Activated CD4-positive, alpha-beta T cell treated with anti-CD3 and anti-CD28 coated beads, Interleukin-2, amount 10 ng/mL, durations not matched to agents 24 days and 14 days (primary cell): ENCODE measurements at regions of chr10 and their contacts with region 1.

Region 1: GRCh38 chr10:99435986-99436638 is 5.7 kb upstream of the GOT1 start:
- DNase-seq: no peak
- H3K4me3 Mint-ChIP-seq: no peak overlapping the region
- H3K27ac Mint-ChIP-seq: no peak overlapping the region
- H3K4me1 Mint-ChIP-seq: peaks cover 18% of the 10 kb centered on the region
- H3K27me3 Mint-ChIP-seq: no peaks in the 10 kb centered on the region

Region 2: DNA sequence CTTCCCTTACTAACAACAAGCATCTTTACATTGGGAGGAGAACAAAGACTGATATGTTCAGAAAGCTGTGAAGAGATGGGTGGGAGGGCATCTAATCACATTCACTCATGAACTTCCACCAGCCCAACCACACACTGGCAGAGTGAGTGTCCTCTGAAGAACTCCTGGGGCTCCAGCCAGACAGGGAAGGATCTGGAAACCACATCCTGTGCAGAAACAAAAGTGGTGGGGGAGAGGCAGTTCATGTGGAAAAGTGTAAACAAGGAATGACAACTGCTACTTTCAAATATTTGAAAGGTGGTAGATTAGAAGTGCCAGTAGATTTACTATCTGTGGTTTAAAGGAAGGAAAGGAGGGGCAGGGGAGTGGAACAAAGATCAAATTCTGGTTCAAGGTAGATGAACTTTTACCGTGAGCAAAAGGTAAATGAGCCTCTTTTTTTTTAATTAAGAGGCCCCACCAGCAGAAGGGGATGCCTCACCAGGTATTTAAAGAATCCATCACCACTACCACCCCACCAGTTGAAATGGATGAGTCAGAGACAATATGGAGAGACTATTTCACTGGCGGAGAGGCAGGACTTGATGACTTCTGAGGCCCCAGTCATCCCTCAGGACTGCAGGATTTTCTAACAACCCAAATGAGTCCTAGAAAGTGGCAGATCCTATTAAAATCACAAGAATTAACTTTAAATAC is 40.2 kb before region 1 on chr10:
- intact Hi-C with region 1: loop called (anchors 1 kb)
- DNase-seq: no peak
- H3K4me3 Mint-ChIP-seq: no peak overlapping the region
- H3K27ac Mint-ChIP-seq: peak overlapping the region; percentile 20
- H3K4me1 Mint-ChIP-seq: peaks cover 8% of the 10 kb centered on the region
- H3K27me3 Mint-ChIP-seq: peaks cover 2% of the 10 kb centered on the region

Region 3: GRCh38 chr10:99560277-99561126 is 124.4 kb after region 1 on chr10:
- intact Hi-C with region 1: loop called (anchors 5 kb)
- DNase-seq: peak; percentile 82
- H3K4me3 Mint-ChIP-seq: no peak overlapping the region
- H3K27ac Mint-ChIP-seq: no peak overlapping the region
- H3K4me1 Mint-ChIP-seq: peaks cover 7% of the 10 kb centered on the region
- H3K27me3 Mint-ChIP-seq: peaks cover 26% of the 10 kb centered on the region